Heart left ventricle (tissue), 16 donors: ENCODE measurements at regions of chr7 and their contacts with region 1.

Region 1: GRCh38 chr7:143416565-143417149 is 8.0 kb upstream of the EPHA1 start:
- DNase-seq: no peak
- ATAC-seq: peak in 1 of 4 donors; percentile 52
- H3K4me3 ChIP-seq: no peak overlapping the region
- H3K27ac ChIP-seq: no peak overlapping the region
- H3K4me1 ChIP-seq: peaks cover 0 to 24% (median 0%) of the 10 kb centered on the region in 12 donors
- H3K27me3 ChIP-seq: peaks cover 0 to 36% (median 0%) of the 10 kb centered on the region in 9 donors
- CTCF ChIP-seq: peak; percentile 73 to 90 (median 84)
- POLR2A ChIP-seq: no peak

Region 2: DNA sequence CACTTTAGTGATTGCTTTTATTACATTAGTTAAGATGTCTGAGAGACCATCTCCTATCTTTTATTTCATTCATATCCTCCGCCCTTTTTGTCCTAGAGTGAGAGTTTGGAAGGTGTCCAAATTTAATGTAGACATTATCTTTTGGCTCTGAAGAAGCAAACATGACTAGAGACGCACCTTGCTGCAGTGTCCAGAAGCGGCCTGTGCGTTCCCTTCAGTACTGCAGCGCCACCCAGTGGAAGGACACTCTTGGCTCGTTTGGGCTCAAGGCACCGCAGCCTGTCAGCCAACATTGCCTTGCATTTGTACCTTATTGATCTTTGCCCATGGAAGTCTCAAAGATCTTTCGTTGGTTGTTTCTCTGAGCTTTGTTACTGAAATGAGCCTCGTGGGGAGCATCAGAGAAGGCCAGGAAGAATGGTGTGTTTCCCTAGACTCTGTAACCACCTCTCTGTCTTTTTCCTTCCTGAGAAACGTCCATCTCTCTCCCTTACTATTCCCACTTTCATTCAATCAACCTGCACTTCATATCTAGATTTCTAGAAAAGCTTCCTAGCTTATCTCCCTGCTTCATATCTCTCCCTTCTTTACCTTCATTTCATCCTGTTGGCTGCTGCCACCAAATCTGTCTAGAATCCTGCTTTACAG is 111.1 kb before region 1 on chr7:
- intact Hi-C with region 1: loop called in 5 of 10 experiments (anchors 10 kb)
- DNase-seq: peak; percentile 64 to 83 (median 70)
- ATAC-seq: peak in 3 of 4 donors; percentile 86 to 93 (median 89)
- H3K4me3 ChIP-seq: no peak overlapping the region
- H3K27ac ChIP-seq: no peak overlapping the region
- H3K4me1 ChIP-seq: peaks cover 0 to 31% (median 0%) of the 10 kb centered on the region in 12 donors
- H3K27me3 ChIP-seq: no peaks in the 10 kb centered on the region
- CTCF ChIP-seq: peak; percentile 71 to 87 (median 80)
- POLR2A ChIP-seq: no peak

Region 3: DNA sequence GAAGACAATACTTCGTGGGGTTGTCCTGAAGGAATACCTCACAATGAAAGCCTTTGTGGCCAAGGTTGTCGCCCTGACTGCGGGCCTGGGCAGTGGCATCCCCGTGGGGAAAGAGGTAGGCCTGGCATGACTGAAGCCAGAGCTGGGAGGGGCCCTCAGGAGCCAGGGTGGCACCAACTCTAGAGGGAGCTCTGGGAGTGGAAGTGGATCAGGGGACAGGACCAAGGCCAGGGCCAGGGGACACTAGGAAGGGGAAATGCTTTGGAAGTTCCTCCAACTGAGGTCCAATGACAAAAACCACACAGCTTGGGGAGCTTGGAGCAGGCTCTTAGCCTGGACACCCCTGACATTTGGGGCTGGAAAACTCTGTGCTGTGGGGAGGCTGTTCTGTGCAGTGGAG is 94.9 kb before region 1 on chr7:
- intact Hi-C with region 1: loop called in 3 of 10 experiments (anchors 5 to 10 kb)
- DNase-seq: peak in 2 of 5 donors; percentile 24 to 41
- ATAC-seq: peak in 3 of 4 donors; percentile 32 to 53 (median 45)
- H3K4me3 ChIP-seq: no peak overlapping the region
- H3K27ac ChIP-seq: peak overlapping the region in 1 of 12 donors; percentile 27
- H3K4me1 ChIP-seq: peaks cover 0 to 17% (median 0%) of the 10 kb centered on the region in 12 donors
- H3K27me3 ChIP-seq: no peaks in the 10 kb centered on the region
- CTCF ChIP-seq: peak in 1 of 12 donors; percentile 18
- POLR2A ChIP-seq: no peak

Region 4: GRCh38 chr7:143345428-143345900 is 71.2 kb before region 1 on chr7:
- intact Hi-C with region 1: no loop called
- DNase-seq: peak; percentile 28 to 76 (median 46)
- ATAC-seq: peak in 3 of 4 donors; percentile 74 to 83 (median 79)
- H3K4me3 ChIP-seq: peak overlapping the region in 5 of 12 donors; percentile 1 to 48 (median 21)
- H3K27ac ChIP-seq: no peak overlapping the region
- H3K4me1 ChIP-seq: peaks cover 0 to 10% (median 0%) of the 10 kb centered on the region in 12 donors
- H3K27me3 ChIP-seq: peaks cover 0 to 42% (median 9%) of the 10 kb centered on the region in 9 donors
- CTCF ChIP-seq: peak in 11 of 12 donors; percentile 11 to 54 (median 32)
- POLR2A ChIP-seq: no peak

Region 5: GRCh38 chr7:143362131-143363015 is 54.3 kb before region 1 on chr7 and contains the start of gene FAM131B:
- intact Hi-C with region 1: loop called in 2 of 10 experiments (anchors 10 kb)
- DNase-seq: no peak
- ATAC-seq: peak in 2 of 4 donors; percentile 42
- H3K4me3 ChIP-seq: peak within 1 kb of the TSS; percentile 11 to 70 (median 51)
- H3K27ac ChIP-seq: peak within 1 kb of the TSS in 1 of 12 donors; percentile 25
- H3K4me1 ChIP-seq: peaks cover 0 to 18% (median 4%) of the 10 kb centered on the region in 12 donors
- H3K27me3 ChIP-seq: peaks cover 5 to 55% (median 32%) of the 10 kb centered on the region in 9 donors
- CTCF ChIP-seq: no peak
- POLR2A ChIP-seq: no peak
- total RNA-seq, gene FAM131B: 0.15 to 0.79 (median 0.42) TPM

Region 6: DNA sequence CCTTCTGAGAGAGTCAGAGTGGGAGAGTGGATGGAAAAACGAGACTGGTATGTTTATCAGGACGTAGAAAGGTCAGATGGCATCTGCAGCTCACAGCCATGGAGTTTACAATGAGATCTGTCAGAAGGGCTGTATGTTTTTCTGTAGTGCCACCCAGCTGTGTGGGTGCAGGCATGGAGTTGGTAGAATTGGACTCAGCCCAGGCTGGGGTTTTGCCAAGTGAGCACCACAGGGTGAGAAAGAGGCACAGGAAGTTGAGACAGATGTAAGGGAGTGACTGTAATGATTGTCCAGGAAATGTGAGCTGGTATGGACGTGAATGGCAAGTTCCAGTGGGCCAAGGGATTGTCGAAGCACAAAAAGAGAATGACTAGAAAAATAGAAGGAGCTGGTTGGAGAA is 44.6 kb before region 1 on chr7:
- intact Hi-C with region 1: loop called in 4 of 10 experiments (anchors 5 to 10 kb)
- DNase-seq: peak in 3 of 5 donors; percentile 64 to 73 (median 67)
- ATAC-seq: peak in 3 of 4 donors; percentile 64 to 76 (median 74)
- H3K4me3 ChIP-seq: no peak overlapping the region
- H3K27ac ChIP-seq: peak overlapping the region in 1 of 12 donors; percentile 70
- H3K4me1 ChIP-seq: peaks cover 0 to 56% (median 0%) of the 10 kb centered on the region in 12 donors
- H3K27me3 ChIP-seq: no peaks in the 10 kb centered on the region
- CTCF ChIP-seq: peak in 3 of 12 donors; percentile 25 to 34 (median 26)
- POLR2A ChIP-seq: no peak